GM13976 (cell line): ENCODE measurements at regions of chr17 and their contacts with region 1.

Region 1: GRCh38 chr17:21705021-21705601 is 12.8 kb downstream of the KCNJ18 start:
- DNase-seq: no peak
- CTCF ChIP-seq: no peak

Region 2: GRCh38 chr17:21419299-21420239 is 285.5 kb before region 1 on chr17:
- in situ Hi-C with region 1: loop called (anchors 25 kb)
- DNase-seq: no peak
- CTCF ChIP-seq: no peak

Region 3: GRCh38 chr17:21602176-21602575 is 102.9 kb before region 1 on chr17:
- in situ Hi-C with region 1: no loop called
- DNase-seq: no peak
- CTCF ChIP-seq: no peak

Region 4: GRCh38 chr17:21823090-21823489 is 118.0 kb after region 1 on chr17:
- in situ Hi-C with region 1: no loop called
- DNase-seq: peak; percentile 0
- CTCF ChIP-seq: no peak